AG04449 (cell line): ENCODE measurements at regions of chr7 and their contacts with region 1.

Region 1: DNA sequence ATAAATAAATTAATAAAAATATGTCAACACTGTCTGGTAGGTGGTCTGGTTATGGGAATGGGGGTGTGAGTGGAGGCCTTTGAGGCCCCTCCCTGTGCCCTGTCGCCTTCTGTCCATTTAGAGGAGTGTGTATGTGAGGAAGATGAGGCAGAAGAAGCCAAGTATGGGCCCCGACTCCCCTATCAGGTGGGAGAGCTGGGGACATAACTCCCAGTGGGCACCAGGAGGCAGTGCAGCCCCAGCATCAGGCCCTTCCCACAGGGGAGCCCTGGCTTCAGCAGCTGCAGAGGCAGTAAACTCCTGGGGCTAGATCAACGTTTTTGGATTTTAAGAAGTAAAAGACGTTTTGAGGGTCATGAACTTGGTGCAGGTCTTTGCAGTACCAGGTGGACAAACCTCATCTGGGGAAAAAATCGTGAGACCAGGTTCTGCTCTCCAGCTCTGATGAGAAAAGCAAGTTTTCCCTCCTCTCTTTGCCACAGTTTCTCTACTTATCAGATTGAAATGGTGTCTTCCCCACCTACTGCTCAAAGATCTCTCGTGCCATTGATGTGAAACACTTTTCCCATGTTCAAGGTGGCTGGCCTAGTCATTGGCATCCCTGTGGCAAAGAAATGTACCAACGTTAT is 167.8 kb upstream of the EEPD1 start:
- DNase-seq: no peak
- H3K4me3 ChIP-seq: no peak overlapping the region
- CTCF ChIP-seq: peak; percentile 97

Region 2: GRCh38 chr7:36280840-36281812 is 295.9 kb after region 1 on chr7:
- CTCF ChIA-PET with region 1: interaction called, 40 read pairs
- POLR2A ChIA-PET with region 1: no interaction called
- DNase-seq: peak; percentile 52
- H3K4me3 ChIP-seq: peak overlapping the region; percentile 34
- CTCF ChIP-seq: no peak

Region 3: GRCh38 chr7:36303202-36304098 is 318.2 kb after region 1 on chr7:
- CTCF ChIA-PET with region 1: interaction called, 39 read pairs
- POLR2A ChIA-PET with region 1: no interaction called
- DNase-seq: peak; percentile 75
- H3K4me3 ChIP-seq: no peak overlapping the region
- CTCF ChIP-seq: no peak

Region 4: DNA sequence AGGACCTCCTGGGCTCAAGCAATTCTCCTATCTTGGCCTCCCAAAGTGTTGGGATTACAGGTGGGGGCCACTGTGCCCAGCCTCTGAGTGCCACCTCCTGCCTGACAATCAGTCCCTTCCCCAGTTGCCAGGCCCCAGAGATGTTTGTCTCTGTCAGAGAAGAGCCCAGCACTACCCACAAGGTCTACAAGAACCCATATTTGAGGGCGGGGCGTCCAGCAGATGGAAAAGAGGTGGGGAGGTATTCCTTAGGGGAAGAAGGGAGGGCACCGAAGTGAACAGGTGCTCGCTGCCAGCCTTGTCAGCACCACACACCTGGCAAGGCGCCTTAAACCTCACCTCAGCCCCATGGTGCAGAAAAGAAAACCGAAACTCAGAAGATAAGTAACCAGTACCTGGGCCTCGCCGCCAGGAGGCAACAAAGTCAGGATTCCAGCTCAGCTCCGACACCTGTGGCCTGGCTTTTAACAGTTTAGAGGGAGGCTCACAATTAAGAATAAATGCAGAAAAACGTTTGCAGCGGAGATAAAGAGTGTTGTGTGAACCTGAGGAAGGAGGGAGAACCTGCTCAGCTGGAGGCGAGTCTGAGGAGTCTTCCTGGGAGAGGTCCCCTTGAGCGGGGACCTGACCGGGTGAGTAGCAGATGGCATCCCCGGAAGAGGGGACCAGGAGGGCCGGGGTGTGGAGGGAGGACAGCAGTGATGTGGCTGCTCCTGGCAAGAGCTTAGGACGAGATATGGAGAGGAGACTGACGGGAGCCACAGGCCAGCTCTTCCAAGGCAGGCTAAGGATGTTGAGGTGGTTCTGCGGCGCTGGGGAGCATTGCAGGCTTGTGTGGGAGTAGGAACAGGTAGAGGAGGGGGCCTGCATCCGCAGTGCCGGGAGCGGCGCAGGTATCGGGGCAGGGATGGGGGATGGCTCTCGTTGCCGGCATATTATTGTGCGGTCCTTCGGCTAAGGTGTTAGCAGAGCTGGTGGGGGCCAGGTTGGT is 327.4 kb after region 1 on chr7:
- CTCF ChIA-PET with region 1: interaction called, 151 read pairs
- POLR2A ChIA-PET with region 1: no interaction called
- DNase-seq: no peak
- H3K4me3 ChIP-seq: no peak overlapping the region
- CTCF ChIP-seq: peak; percentile 15